Breast epithelium (tissue), 4 donors: ENCODE measurements at regions of chr16 and their contacts with region 1.

Region 1: GRCh38 chr16:2256531-2257140 is 5.2 kb upstream of the ECI1 start:
- DNase-seq: no peak
- H3K4me3 ChIP-seq: no peak overlapping the region
- H3K27ac ChIP-seq: no peak overlapping the region
- H3K4me1 ChIP-seq: no peaks in the 10 kb centered on the region
- H3K27me3 ChIP-seq: no peaks in the 10 kb centered on the region
- CTCF ChIP-seq: no peak
- POLR2A ChIP-seq: no peak

Region 2: DNA sequence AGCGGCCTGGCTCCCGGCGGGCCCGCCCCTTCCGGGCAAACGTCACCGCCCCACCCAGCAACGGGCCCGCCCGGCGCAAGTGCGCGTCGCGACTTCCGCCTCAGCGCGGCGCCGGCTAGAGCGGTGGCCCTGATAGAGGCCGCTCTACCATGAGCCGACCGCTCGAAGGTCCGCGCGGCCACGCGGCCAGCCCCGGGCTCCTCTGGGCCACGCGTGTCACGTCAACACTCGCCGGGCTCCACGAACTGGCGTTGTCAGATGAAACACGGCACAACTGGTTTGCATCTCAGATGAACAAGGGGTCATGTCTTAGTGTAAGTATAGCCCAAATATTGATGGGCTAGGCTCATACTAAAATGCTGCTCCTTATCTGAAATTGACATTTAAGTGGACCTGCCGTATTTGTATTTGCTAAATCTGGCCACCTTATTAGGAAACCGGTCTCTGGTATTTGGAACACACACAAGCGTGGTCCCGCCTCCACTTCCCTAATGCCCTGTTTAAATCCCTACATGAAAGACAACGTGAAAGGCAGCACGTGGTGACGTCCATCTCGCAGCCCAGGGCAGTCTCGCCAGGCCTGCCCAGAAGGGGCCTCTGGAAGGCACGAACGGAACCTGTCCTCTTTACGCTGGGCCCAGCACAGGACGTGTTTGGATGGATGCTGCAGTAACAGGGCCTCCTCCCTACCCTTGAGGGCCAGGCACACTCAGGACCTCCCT is 246.7 kb before region 1 on chr16 and contains the start of gene ZNF598:
- intact Hi-C with region 1: no loop called
- DNase-seq: peak; percentile 56 to 74
- H3K4me3 ChIP-seq: peak within 1 kb of the TSS; percentile 87 to 96 (median 87)
- H3K27ac ChIP-seq: peak within 1 kb of the TSS; percentile 92 to 97
- H3K4me1 ChIP-seq: peaks cover 9 to 24% of the 10 kb centered on the region in 2 donors
- H3K27me3 ChIP-seq: no peaks in the 10 kb centered on the region
- CTCF ChIP-seq: peak in 1 of 3 donors; percentile 6
- POLR2A ChIP-seq: peak; percentile 77
- total RNA-seq, gene ZNF598: 16.0 to 25.2 (median 22.2) TPM

Region 3: DNA sequence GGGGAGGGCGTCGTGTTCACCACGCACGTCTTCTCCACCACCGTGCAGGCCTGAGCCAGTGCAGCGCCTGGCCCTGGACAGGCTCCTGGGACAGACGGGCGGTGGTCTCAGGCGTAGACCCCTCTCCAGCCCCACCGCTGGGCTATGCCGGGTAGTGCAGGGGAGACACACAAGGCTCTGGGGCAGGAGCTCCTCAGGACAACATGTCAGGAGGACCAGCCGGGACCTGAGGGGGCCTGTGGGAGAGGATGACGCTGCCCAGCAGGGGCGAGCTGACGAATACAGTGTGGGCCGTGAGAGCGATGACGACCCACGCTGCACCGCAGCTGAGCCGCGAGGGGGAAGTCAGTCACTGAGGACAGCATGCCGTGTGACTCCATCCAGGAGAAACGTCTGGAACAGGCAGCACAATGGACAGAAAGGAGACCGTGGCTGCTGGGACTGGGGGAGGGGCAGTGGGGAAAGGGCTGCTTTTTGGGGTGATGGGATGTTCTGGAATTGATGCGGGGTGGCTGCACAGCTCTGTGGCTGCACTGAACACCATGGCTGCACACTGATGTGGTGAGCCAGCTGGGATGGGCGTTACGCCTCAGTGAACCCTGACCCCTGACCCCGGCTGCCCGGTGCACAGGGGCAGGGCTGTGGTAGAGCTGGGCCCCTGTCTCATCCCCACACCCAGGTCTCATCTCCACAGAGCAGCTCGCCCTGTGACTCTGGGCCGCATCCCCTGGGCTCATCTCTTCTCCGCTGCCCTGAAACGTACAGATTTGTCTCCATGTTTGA is 1418.1 kb after region 1 on chr16:
- intact Hi-C with region 1: loop called (anchors 5 kb)
- DNase-seq: no peak
- H3K4me3 ChIP-seq: no peak overlapping the region
- H3K27ac ChIP-seq: no peak overlapping the region
- H3K4me1 ChIP-seq: no peaks in the 10 kb centered on the region
- H3K27me3 ChIP-seq: no peaks in the 10 kb centered on the region
- CTCF ChIP-seq: no peak
- POLR2A ChIP-seq: no peak